Aorta (tissue), 5 donors: ENCODE measurements at regions of chr17 and their contacts with region 1.

Region 1: DNA sequence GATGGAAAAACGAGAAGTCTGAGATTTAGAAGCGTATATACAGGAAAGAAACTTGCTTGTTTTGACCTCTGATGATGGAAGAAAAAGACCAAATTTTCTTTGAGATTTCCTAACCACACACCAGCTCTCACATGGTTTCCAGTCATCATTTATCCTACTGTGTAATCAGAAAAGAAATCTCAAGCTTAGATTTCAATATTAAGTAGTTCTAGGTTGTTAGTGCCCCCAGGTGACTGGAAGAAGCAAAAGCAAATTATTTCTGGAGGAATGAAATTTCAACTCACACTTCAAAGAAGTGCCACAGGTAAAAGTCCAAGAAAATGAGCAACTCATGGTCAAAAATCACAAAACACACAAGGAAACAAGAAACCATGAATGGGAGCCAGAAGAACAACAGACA is 51.8 kb upstream of the KDM6B start:
- DNase-seq: no peak
- ATAC-seq: no peak
- H3K4me3 ChIP-seq: no peak overlapping the region
- H3K27ac ChIP-seq: no peak overlapping the region
- H3K4me1 ChIP-seq: no peaks in the 10 kb centered on the region
- H3K27me3 ChIP-seq: no peaks in the 10 kb centered on the region

Region 2: DNA sequence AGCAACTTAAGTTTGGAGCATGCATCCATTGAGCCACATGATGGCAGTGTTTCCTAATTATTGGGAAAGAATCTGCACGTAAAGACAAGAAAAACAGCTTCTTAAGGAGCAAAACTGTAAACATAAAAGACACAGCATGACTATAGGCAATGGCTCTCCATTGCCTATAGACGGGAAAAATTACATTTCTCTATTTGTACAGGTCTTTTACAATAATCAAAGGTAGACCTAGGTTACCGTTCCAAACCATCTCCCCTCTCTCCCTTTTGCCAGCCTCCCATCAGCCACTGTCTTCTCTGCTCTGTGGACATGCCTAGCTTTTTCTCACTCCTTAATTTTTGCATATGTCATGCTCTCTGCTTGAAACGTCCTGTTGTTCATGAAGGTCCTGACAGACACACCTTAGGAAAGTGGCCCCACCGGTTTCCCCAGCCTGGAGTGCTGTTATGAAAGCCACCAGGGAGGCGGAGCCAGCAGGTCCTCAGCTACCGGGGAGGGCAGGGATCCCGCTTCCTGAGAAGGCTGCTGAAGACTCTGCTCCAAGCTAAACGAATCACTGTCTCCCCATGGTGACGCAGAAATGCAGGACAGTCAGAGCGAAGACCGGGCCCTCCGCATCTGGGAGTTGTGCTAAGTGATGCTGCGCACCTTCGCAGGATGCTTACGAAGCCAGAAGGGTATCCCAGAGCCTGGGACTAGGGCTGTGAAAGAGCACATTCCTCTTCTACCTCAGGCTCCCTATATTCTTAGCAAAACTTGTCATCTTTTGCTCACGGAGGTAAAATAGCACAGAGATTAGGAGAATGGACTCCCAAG is 736.1 kb before region 1 on chr17:
- intact Hi-C with region 1: no loop called
- DNase-seq: no peak
- ATAC-seq: no peak
- H3K4me3 ChIP-seq: no peak overlapping the region
- H3K27ac ChIP-seq: no peak overlapping the region
- H3K4me1 ChIP-seq: no peaks in the 10 kb centered on the region
- H3K27me3 ChIP-seq: no peaks in the 10 kb centered on the region

Region 3: GRCh38 chr17:7538891-7539290 is 243.3 kb before region 1 on chr17:
- intact Hi-C with region 1: no loop called
- DNase-seq: no peak
- ATAC-seq: no peak
- H3K4me3 ChIP-seq: no peak overlapping the region
- H3K27ac ChIP-seq: no peak overlapping the region
- H3K4me1 ChIP-seq: no peaks in the 10 kb centered on the region
- H3K27me3 ChIP-seq: no peaks in the 10 kb centered on the region

Region 4: DNA sequence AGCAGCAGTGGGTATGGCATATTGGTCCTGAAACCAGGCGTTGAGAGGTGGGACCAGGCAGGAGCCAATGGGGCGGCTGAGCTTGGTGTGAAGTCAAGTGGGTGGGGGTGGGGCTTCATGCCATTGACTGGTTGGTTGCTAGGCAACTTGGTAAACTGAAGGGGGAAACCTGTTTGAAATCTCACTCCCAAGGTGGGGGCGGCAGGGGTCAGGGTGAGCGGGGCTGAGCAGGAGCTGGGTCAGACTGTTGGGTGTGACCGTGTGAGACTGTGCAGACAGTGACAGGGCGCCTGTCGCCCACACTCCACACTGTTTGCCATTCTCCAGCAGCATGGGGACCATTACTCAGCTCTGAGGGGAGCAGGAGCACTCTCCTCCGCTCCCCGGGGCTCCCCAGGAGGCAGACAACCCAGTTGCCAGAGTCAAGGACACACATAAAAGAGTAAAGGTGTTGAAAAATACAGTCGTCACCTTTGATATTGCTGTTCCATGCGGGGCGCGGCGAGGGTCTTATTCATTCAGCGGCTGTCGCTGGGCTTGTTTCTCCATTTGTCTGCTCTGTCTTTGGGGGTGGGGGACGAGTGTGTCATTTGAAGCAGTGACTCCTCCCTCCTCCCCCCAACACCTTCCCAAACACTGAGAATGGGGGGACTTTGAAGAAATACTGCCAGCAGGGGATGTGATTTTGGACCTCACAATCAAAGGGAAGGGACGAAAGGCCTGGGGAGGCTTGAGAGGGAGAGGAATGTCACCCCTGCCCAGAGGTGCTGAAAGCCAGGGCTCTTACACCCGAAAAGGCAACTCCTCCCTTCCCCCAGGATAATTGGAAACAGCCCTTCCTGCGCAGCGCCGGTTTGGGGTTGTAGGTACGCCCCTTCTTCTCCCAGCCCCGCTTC is 78.4 kb before region 1 on chr17:
- intact Hi-C with region 1: no loop called
- DNase-seq: peak in 1 of 2 donors; percentile 38
- ATAC-seq: peak; percentile 8
- H3K4me3 ChIP-seq: no peak overlapping the region
- H3K27ac ChIP-seq: no peak overlapping the region
- H3K4me1 ChIP-seq: no peaks in the 10 kb centered on the region
- H3K27me3 ChIP-seq: no peaks in the 10 kb centered on the region

Region 5: GRCh38 chr17:7745748-7746470 is 36.3 kb before region 1 on chr17:
- intact Hi-C with region 1: loop called in 1 of 2 experiments (anchors 2 kb)
- DNase-seq: peak; percentile 21 to 55
- ATAC-seq: no peak
- H3K4me3 ChIP-seq: no peak overlapping the region
- H3K27ac ChIP-seq: no peak overlapping the region
- H3K4me1 ChIP-seq: peaks cover 0 to 2% of the 10 kb centered on the region in 2 donors
- H3K27me3 ChIP-seq: no peaks in the 10 kb centered on the region